Transverse colon (tissue), 4 donors: ENCODE measurements at regions of chr5 and their contacts with region 1.

Region 1: GRCh38 chr5:50905996-50906570 is 239.6 kb downstream of the PARP8 start:
- DNase-seq: no peak
- H3K4me3 ChIP-seq: no peak overlapping the region
- H3K27ac ChIP-seq: no peak overlapping the region
- H3K4me1 ChIP-seq: no peaks in the 10 kb centered on the region
- H3K27me3 ChIP-seq: no peaks in the 10 kb centered on the region
- CTCF ChIP-seq: no peak
- EP300 ChIP-seq: no peak
- POLR2A ChIP-seq: no peak

Region 2: GRCh38 chr5:50945139-50945538 is 39.1 kb after region 1 on chr5:
- in situ Hi-C with region 1: no loop called
- intact Hi-C with region 1: loop called (anchors 2 kb)
- DNase-seq: no peak
- H3K4me3 ChIP-seq: no peak overlapping the region
- H3K27ac ChIP-seq: no peak overlapping the region
- H3K4me1 ChIP-seq: no peaks in the 10 kb centered on the region
- H3K27me3 ChIP-seq: no peaks in the 10 kb centered on the region
- CTCF ChIP-seq: no peak
- EP300 ChIP-seq: no peak
- POLR2A ChIP-seq: no peak